Activated CD4-positive, alpha-beta memory T cell treated with anti-CD3 and anti-CD28 coated beads for 36 hours (primary cell): ENCODE measurements at regions of chr18 and their contacts with region 1.

Region 1: DNA sequence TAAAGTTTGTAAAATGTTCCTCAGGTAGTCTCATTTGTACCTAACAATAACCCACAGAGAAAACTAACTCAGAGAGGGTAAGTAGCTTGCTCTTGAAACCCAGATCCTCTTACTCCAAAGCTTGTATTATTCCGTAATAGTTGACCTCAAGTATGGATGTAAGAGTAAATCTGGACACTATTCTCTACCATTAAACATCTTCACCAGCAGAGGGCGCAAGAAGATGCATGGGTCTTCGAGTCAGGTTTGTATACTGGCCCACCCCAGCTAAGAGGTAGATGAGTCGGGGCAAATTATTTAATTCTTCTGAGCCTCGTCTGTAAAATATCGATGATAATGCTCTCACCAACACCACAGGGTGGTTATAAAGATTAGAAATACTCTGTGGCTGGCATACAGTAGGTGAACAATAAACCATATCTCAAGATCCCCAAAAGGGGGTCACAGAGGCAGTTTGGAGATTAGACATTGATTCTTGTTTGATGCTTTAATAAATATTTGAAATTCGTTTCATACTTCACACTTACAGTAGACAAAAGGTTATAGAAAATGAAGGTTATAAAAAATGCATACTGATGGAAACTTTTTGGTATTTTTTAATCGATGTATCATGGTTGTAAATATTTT is 3.5 kb upstream of the CABLES1 start:
- DNase-seq: peak; percentile 55
- H3K4me3 Mint-ChIP-seq: peak overlapping the region; percentile 8
- H3K27ac Mint-ChIP-seq: no peak overlapping the region
- H3K4me1 Mint-ChIP-seq: peaks cover 14% of the 10 kb centered on the region
- H3K27me3 Mint-ChIP-seq: peaks cover 25% of the 10 kb centered on the region

Region 2: GRCh38 chr18:23077493-23078256 is 54.1 kb before region 1 on chr18:
- CTCF ChIA-PET with region 1: no interaction called
- POLR2A ChIA-PET with region 1: no interaction called
- intact Hi-C with region 1: no loop called
- DNase-seq: no peak
- H3K4me3 Mint-ChIP-seq: no peak overlapping the region
- H3K27ac Mint-ChIP-seq: no peak overlapping the region
- H3K4me1 Mint-ChIP-seq: peaks cover 11% of the 10 kb centered on the region
- H3K27me3 Mint-ChIP-seq: no peaks in the 10 kb centered on the region

Region 3: DNA sequence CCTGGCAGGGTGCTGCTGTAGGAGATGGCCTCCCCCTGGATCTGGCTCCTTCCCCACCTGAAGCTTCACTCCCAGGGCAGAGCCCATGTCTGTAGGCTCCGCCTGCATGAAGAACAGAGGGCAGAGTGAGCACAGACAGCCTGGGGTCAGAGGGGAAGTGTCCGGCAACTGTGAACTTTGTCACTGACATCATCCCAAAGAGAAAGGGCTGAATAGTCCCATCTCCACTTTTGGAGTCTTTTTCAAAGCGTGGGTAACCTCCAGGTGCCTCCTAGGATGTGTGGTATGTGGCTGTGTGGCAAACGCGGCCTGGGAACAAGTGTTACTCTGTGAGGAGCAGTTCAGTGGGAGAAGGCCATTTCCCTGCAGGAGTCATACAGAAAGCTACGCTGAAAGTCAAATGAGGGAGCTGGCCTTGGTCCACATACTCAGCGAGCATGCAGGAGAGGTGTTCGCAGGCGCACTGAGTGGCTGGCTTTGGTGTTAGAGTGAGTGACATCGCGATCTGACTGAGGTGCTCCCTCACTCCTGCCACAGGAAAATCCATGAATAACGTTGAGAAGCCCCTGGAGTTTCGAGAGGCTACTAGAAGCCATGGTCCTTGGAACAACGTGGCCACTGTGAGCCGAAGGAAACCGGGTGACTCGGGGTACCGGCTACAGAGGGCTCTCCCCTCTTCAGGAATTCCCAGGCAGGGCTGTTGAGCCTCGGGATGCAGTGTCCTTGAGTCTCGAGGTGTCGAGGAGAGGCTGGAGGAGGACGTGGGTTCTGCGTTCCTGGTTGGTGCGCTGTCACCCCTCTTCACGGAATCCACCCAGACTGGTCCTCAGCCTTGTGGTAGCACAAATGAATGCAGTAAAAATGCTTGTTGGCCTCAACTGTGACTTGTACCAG is 58.2 kb after region 1 on chr18:
- CTCF ChIA-PET with region 1: no interaction called
- POLR2A ChIA-PET with region 1: no interaction called
- intact Hi-C with region 1: no loop called
- DNase-seq: no peak
- H3K4me3 Mint-ChIP-seq: no peak overlapping the region
- H3K27ac Mint-ChIP-seq: no peak overlapping the region
- H3K4me1 Mint-ChIP-seq: peaks cover 10% of the 10 kb centered on the region
- H3K27me3 Mint-ChIP-seq: no peaks in the 10 kb centered on the region

Region 4: DNA sequence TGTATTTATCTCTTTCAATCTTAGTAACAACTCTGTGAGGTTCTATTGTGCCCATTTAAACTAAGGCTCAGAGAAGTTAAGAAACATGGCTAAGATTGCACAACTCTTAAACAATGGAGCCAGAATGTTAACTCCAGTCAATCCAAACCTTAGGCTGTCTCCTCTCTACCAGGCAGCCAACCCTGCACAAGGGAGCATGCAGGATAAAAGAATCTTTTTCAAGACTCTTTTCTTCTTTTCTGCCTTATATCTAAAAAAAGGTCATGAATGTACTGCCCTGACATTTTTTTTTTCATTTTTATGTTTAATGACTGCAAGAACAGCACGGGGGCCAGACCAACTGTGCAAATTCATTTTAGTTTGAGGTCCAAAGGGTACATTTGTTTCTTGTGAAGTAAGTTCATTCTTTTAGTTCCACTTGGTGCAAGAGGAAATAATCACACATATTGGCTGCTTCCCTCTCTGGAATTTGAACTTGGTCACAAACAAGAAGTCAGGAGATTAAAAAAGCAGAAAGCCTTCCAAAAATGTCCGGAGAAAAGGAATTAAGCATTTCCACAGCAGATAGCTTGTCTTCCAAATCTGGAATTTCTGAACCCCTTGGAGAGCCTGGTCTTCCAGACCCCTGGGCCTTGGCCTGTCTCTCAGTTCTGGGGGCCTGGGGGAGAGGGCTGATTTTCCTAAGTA is 225.3 kb after region 1 on chr18:
- CTCF ChIA-PET with region 1: interaction called, 4 read pairs
- POLR2A ChIA-PET with region 1: no interaction called
- intact Hi-C with region 1: loop called (anchors 1 kb)
- DNase-seq: no peak
- H3K4me3 Mint-ChIP-seq: no peak overlapping the region
- H3K27ac Mint-ChIP-seq: no peak overlapping the region
- H3K4me1 Mint-ChIP-seq: peaks cover 10% of the 10 kb centered on the region
- H3K27me3 Mint-ChIP-seq: no peaks in the 10 kb centered on the region